Activated CD4-positive, alpha-beta T cell treated with anti-CD3 and anti-CD28 coated beads, Interleukin-2, amount 10 ng/mL, durations not matched to agents 24 days and 14 days (primary cell): ENCODE measurements at regions of chr9 and their contacts with region 1.

Region 1: DNA sequence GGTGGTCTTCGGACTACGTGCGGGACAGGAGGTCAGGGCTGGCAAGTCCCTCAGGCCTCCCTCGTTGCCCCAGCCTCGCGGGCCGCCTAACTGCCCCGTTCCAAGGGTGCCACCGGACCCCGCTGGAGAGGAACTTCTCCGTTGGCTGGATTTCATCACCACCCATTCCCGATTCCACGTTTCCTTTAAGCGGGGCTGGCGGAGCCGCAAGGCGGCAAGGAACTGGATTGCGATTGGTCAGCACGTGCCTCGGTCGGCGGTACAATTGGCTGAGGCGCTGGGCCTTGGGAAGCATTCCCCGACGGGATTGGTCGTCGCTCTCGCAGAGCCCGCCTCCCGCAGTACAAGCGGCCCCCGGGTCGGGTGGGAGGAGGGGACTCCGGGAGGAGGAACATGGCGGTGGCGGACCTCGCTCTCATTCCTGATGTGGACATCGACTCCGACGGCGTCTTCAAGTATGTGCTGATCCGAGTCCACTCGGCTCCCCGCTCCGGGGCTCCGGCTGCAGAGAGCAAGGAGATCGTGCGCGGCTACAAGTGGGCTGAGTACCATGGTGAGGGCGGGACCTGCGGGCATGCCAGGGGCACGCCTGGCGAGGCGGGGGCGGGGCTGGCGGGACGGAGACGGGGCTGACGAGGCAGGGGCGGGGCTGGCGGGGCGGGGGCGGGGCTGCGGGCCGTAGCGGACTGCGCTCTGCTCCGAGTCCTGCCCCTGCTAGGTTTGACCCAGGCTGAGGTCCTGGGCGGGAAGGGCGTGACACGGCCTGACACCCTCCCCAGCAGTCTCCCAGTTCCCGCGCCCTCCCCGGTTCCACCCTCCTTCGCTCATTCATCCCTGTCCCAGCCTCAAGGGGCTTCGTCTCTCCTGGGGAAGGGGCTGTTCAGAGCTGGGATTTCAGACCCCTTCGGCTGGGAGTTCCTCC is at the start of gene PHPT1:
- DNase-seq: peak; percentile 99
- H3K4me3 Mint-ChIP-seq: peak within 1 kb of the TSS; percentile 96
- H3K27ac Mint-ChIP-seq: peak within 1 kb of the TSS; percentile 94
- H3K4me1 Mint-ChIP-seq: peaks cover 11% of the 10 kb centered on the region
- H3K27me3 Mint-ChIP-seq: peaks cover 7% of the 10 kb centered on the region
- total RNA-seq, gene PHPT1: 134 and 145 TPM in 2 replicates

Region 2: DNA sequence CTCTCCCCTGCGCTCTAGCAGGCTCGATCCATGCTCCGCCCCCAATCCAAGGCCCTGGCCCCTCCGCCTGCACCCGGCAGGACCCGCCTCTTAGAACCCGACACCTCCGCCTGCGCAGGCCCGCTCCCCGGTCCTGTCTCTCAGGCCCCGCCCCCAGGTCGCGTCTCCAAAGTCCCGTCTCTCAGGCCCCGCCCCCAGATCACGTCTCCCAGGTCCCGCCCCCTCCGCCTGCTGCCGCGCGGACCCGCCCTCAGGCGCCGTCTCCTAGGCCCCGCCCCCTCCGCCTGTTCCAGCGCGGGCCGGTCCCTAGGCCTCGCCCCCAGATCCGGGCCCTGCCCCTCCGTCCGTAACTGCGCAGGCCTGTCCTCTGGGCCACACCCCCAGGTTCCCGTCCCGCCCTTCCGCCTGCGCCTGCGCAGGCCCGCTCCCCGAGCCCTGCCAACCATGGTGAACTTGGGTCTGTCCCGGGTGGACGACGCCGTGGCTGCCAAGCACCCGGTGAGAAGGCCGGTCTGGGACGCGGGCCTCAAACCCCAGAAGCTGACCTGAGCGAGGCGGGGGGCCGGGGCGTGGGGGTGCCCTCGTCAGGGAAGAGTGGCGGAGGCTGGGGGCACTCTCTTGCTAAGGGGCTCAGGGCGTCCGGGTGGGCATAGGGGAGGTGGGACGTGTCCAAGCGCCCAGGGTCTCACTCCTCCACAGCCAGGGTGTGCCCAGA is 58.2 kb before region 1 on chr9 and contains the start of gene TMEM141:
- intact Hi-C with region 1: loop called (anchors 2 kb)
- DNase-seq: peak; percentile 100
- H3K4me3 Mint-ChIP-seq: peak within 1 kb of the TSS; percentile 87
- H3K27ac Mint-ChIP-seq: peak within 1 kb of the TSS; percentile 91
- H3K4me1 Mint-ChIP-seq: peaks cover 26% of the 10 kb centered on the region
- H3K27me3 Mint-ChIP-seq: peaks cover 16% of the 10 kb centered on the region
- total RNA-seq, gene TMEM141: 36.1 and 40.1 TPM in 2 replicates

Region 3: DNA sequence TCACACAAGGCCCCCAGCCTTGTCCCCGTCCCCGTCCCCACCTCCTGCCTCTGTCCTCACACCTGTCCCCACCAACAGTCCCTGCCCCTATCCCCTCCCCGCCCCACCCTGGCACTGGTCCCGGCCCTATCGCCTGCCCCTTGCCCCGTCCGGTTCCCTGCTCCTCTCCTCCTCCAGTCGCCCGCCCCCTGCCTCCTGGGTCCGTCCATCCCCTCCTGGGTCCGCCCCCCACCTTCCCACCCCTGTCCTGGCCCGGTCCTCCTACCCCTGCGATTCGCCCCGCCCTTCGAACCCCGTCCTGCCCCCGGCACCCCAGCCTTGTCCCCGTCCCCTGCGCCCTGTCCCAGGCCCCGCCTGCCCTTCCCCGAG is 16.4 kb after region 1 on chr9:
- intact Hi-C with region 1: loop called (anchors 2 kb)
- DNase-seq: no peak
- H3K4me3 Mint-ChIP-seq: peak overlapping the region; percentile 90
- H3K27ac Mint-ChIP-seq: peak overlapping the region; percentile 89
- H3K4me1 Mint-ChIP-seq: peaks cover 19% of the 10 kb centered on the region
- H3K27me3 Mint-ChIP-seq: no peaks in the 10 kb centered on the region

Region 4: DNA sequence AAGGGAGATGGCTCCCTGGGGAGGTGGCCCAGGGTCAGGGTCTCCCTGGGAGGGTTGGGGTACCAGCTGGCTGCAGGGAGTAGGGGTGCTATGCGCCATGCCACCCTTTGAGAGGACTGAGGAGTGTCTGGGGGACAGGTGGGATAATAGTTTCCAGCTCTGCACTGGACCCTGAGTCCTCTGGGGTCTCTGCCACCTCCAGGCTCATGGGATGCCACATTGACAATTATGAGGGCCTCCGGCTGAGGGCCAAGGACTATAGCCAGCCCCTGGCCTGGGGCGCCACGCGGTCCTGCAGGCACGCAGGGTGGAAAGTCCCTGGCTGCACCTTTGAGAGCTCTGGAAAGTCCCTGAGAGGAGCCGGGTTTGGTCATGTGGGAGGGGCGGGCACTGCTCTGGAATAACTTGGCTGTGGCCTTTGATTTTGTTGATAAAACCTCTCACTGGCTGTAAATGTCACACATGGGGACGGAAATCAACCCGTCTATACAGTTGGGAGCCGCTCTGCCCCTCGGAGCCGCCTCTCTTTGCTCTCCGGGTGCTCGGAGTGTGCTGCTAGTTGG is 53.0 kb after region 1 on chr9:
- intact Hi-C with region 1: loop called (anchors 2 kb)
- DNase-seq: peak; percentile 97
- H3K4me3 Mint-ChIP-seq: peak overlapping the region; percentile 78
- H3K27ac Mint-ChIP-seq: peak overlapping the region; percentile 99
- H3K4me1 Mint-ChIP-seq: peaks cover 48% of the 10 kb centered on the region
- H3K27me3 Mint-ChIP-seq: no peaks in the 10 kb centered on the region

Region 5: GRCh38 chr9:137046098-137046787 is 196.9 kb after region 1 on chr9 and contains the start of gene NPDC1:
- intact Hi-C with region 1: loop called (anchors 5 kb)
- DNase-seq: peak; percentile 95
- H3K4me3 Mint-ChIP-seq: peak within 1 kb of the TSS; percentile 78
- H3K27ac Mint-ChIP-seq: peak within 1 kb of the TSS; percentile 15
- H3K4me1 Mint-ChIP-seq: peaks cover 7% of the 10 kb centered on the region
- H3K27me3 Mint-ChIP-seq: peaks cover 31% of the 10 kb centered on the region
- total RNA-seq, gene NPDC1: 58.1 and 59.4 TPM in 2 replicates

Region 6: GRCh38 chr9:137350696-137351584 is 501.6 kb after region 1 on chr9:
- intact Hi-C with region 1: no loop called
- DNase-seq: no peak
- H3K4me3 Mint-ChIP-seq: no peak overlapping the region
- H3K27ac Mint-ChIP-seq: no peak overlapping the region
- H3K4me1 Mint-ChIP-seq: no peaks in the 10 kb centered on the region
- H3K27me3 Mint-ChIP-seq: no peaks in the 10 kb centered on the region